BJ (cell line): ENCODE measurements at regions of chr9 and their contacts with region 1.

Region 1: GRCh38 chr9:92140074-92140753 is 25.0 kb upstream of the SPTLC1 start:
- DNase-seq: no peak
- H3K4me3 ChIP-seq: no peak overlapping the region
- H3K27me3 ChIP-seq: peaks cover 1% of the 10 kb centered on the region; the same call in 1 of the 2 replicates
- CTCF ChIP-seq: peak; percentile 96

Region 2: DNA sequence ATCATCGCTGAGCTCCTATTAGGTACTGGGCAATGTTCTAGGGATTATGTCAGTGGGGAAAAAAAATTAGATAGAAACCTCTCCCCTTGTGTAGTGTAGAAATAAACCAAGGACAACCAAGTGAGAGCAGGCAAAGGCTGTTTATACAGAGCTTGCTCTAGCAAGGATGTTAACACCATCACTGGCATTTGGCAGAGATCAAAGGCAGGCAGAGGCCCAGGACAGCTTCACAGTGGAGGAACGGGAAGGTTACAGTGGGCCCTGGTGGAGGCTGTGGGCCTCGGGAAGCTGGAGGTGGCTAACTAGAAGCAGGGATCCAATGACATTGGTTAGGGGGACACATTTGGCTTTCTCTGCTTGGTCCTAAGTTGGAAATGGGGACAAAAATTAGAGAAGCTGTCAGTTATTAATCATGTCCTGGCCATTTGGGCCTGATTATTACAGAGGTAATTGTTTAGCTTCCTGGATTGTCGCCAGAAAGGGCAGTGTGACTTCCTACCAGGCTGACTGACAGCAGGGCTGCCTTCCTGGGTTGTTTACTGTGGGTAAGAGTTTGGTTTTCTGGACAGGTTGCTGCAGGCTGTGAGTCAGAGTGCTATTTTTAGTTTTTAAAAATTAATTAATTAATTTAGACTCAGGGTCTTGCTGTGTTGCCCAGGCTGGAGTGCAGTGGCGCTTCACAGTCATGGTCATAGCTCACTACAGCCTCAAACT is 449.5 kb before region 1 on chr9:
- CTCF ChIA-PET with region 1: no interaction called
- POLR2A ChIA-PET with region 1: no interaction called
- DNase-seq: no peak
- H3K4me3 ChIP-seq: no peak overlapping the region
- H3K27me3 ChIP-seq: no peaks in the 10 kb centered on the region
- CTCF ChIP-seq: no peak

Region 3: GRCh38 chr9:91843623-91844148 is 296.5 kb before region 1 on chr9:
- CTCF ChIA-PET with region 1: no interaction called
- POLR2A ChIA-PET with region 1: no interaction called
- DNase-seq: no peak
- H3K4me3 ChIP-seq: no peak overlapping the region
- H3K27me3 ChIP-seq: no peaks in the 10 kb centered on the region
- CTCF ChIP-seq: no peak

Region 4: DNA sequence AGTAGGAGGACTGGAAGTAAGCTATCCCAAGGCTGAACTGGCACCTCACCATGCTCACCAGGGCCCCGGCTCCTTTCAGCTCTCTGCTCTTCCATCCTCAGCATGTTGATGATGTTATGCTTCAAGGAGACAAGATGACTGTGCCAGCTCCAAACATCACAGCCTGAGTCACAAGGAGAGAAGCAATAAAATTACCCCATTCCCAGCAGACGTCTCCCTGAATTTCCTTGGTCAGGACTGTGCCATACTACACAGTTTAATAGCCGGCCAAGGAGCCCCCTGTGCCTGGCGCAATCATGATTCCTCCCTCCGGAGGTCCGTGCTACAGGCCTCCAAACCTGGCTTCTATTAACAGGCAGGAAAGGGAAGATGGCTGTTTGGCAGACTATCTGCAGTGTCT is 139.0 kb before region 1 on chr9:
- CTCF ChIA-PET with region 1: no interaction called
- POLR2A ChIA-PET with region 1: no interaction called
- DNase-seq: peak; percentile 50
- H3K4me3 ChIP-seq: no peak overlapping the region
- H3K27me3 ChIP-seq: no peaks in the 10 kb centered on the region
- CTCF ChIP-seq: no peak

Region 5: DNA sequence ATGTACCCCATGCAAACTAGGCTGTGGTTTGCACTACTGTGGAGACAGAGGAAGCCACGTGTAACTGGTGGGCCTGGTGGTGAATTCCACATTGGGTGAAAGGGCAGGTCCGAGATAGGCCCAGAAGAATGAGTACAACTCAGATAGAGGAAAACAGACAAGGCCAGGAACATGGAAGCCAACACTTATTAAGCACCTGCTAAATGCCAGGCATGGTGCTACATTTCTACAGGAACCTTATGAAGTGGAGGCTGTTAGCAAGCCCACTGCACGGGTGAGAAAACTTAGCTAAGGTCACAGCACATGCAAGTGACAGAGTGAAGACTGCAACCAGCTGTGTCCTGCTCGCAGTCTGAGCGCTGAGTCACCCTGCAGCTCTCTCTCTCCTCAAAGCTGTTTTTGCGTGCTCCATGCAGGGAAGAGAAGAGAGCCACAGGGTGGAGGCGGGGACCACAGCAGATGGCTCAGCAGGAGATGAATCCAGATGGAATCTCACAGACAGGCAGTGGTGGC is 40.5 kb after region 1 on chr9:
- CTCF ChIA-PET with region 1: interaction called, 29 read pairs
- POLR2A ChIA-PET with region 1: no interaction called
- DNase-seq: peak; percentile 67
- H3K4me3 ChIP-seq: no peak overlapping the region
- H3K27me3 ChIP-seq: no peaks in the 10 kb centered on the region; the same call in 1 of the 2 replicates
- CTCF ChIP-seq: no peak

Region 6: GRCh38 chr9:92232190-92232589 is 92.0 kb after region 1 on chr9:
- CTCF ChIA-PET with region 1: interaction called, 375 read pairs
- POLR2A ChIA-PET with region 1: no interaction called
- DNase-seq: no peak
- H3K4me3 ChIP-seq: no peak overlapping the region
- H3K27me3 ChIP-seq: no peaks in the 10 kb centered on the region
- CTCF ChIP-seq: no peak

Region 7: GRCh38 chr9:92276331-92277032 is 136.3 kb after region 1 on chr9:
- CTCF ChIA-PET with region 1: interaction called, 21 read pairs
- POLR2A ChIA-PET with region 1: no interaction called
- DNase-seq: no peak
- H3K4me3 ChIP-seq: no peak overlapping the region
- H3K27me3 ChIP-seq: no peaks in the 10 kb centered on the region
- CTCF ChIP-seq: no peak

Region 8: GRCh38 chr9:92325269-92325990 is 185.2 kb after region 1 on chr9 and contains the starts of genes CENPP and NOL8:
- CTCF ChIA-PET with region 1: interaction called, 15 read pairs
- POLR2A ChIA-PET with region 1: no interaction called
- DNase-seq: peak; percentile 42
- H3K4me3 ChIP-seq: peak within 1 kb of the TSS; percentile 64
- H3K27me3 ChIP-seq: no peaks in the 10 kb centered on the region
- CTCF ChIP-seq: no peak
- polyA plus RNA-seq, gene CENPP: 1.3 and 2.3 TPM in 2 replicates
- polyA plus RNA-seq, gene NOL8: 8.8 and 17.3 TPM in 2 replicates